Heart right ventricle (tissue), 16 donors: ENCODE measurements at regions of chr11 and their contacts with region 1.

Region 1: GRCh38 chr11:86021377-86021776 is 47.5 kb downstream of the PICALM start:
- DNase-seq: no peak
- ATAC-seq: no peak
- H3K4me3 ChIP-seq: no peak overlapping the region
- H3K27ac ChIP-seq: peak overlapping the region in 1 of 10 donors; percentile 40
- H3K4me1 ChIP-seq: peaks cover 0 to 17% (median 0%) of the 10 kb centered on the region in 9 donors
- H3K27me3 ChIP-seq: no peaks in the 10 kb centered on the region
- CTCF ChIP-seq: no peak

Region 2: DNA sequence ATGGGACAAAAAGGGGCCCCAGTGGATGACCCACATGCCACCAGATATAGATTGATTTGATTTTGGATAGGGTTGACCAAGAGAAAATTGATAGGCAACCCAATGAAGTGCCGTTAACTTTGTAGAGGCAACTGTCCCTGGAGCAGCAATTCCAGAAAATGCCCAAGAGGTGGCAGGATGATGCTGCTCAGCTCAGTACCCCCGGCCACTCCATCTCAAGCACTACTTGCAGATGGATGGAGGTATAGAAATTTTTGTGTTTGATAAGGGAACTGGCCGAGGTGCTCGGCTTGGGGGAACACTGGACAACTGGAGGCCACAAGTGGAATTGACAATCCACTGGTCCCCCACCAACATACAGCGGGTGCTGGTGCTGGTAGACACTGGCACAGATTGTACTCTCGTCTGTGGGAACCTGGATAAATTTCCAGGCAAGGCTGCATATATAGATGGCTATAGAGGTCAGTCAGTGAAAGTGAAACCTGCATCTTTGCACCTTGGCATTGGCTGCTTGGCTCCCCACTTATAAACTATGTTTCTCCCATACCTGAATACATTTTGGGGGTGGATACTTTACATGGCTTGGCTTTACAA is 79.9 kb before region 1 on chr11:
- intact Hi-C with region 1: no loop called
- DNase-seq: peak; percentile 25 to 58
- ATAC-seq: peak; percentile 63 to 89 (median 80)
- H3K4me3 ChIP-seq: no peak overlapping the region
- H3K27ac ChIP-seq: no peak overlapping the region
- H3K4me1 ChIP-seq: peaks cover 1 to 22% (median 7%) of the 10 kb centered on the region in 9 donors
- H3K27me3 ChIP-seq: no peaks in the 10 kb centered on the region
- CTCF ChIP-seq: peak; percentile 41 to 87 (median 74)

Region 3: GRCh38 chr11:85961930-85962363 is 59.4 kb before region 1 on chr11:
- intact Hi-C with region 1: no loop called
- DNase-seq: no peak
- ATAC-seq: peak in 2 of 8 donors; percentile 31 to 36
- H3K4me3 ChIP-seq: no peak overlapping the region
- H3K27ac ChIP-seq: no peak overlapping the region
- H3K4me1 ChIP-seq: peaks cover 0 to 22% (median 13%) of the 10 kb centered on the region in 9 donors
- H3K27me3 ChIP-seq: no peaks in the 10 kb centered on the region
- CTCF ChIP-seq: no peak

Region 4: DNA sequence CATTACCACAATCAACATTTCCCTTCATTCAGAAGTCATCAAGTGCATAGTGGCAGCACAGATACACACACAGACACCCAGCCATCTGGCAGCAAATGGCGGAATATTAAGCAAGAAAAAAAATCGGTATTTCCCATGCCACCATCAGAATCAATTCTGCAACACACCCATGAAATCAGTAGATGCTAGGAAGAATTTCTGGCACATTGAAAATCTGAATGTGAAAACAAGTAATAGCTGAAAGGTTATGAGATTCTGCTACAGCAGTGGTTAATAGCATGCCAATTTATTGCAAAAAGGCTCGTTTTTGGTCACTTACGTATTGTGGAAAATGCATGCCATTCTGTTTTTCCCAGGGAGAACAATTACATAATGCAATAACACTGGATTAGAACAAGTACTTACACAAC is 43.6 kb before region 1 on chr11:
- intact Hi-C with region 1: loop called in 1 of 10 experiments (anchors 5 kb)
- DNase-seq: no peak
- ATAC-seq: peak in 4 of 8 donors; percentile 23 to 77 (median 64)
- H3K4me3 ChIP-seq: no peak overlapping the region
- H3K27ac ChIP-seq: peak overlapping the region in 4 of 10 donors; percentile 6 to 54 (median 20)
- H3K4me1 ChIP-seq: peaks cover 0 to 40% (median 22%) of the 10 kb centered on the region in 9 donors
- H3K27me3 ChIP-seq: no peaks in the 10 kb centered on the region
- CTCF ChIP-seq: no peak